Pancreas (tissue), 10 donors: ENCODE measurements at regions of chr1 and their contacts with region 1.

Region 1: DNA sequence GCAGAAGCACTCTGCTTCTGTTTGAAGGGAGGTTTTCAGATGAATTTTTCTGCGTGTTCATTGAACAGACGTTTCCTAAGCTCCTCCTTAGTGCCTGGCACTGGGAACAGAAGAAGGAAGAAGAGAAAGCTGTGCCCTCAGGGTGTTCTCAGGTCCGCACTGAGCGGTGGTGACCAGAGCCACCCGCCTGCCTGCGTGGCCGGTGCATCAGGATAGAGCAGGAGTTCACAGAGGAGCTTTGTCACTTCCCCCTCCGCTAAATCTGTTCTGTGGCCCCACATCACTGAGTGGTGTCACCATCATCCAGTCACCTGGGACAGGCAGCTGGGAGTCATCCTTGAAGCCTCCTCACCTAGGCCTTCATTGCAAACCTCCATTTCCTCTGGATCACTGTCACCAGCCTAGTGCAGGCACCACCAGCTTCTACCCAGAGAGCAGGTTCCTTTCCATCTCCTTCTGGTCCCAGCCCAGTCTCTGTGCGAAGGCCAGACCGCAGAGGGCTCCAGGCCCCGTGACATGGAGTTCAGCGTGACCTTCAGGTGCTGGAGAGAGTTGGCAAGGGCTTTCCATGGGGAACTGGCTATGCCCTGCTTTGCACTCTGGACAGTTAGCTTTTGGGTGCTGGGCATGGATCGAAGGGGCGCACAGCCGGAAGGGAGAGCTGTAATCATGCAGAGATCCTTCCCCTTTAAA is 21.7 kb downstream of the PARK7 start:
- DNase-seq: no peak
- ATAC-seq: peak in 1 of 4 donors; percentile 19
- H3K4me3 ChIP-seq: no peak overlapping the region
- H3K27ac ChIP-seq: no peak overlapping the region
- H3K4me1 ChIP-seq: no peaks in the 10 kb centered on the region
- H3K27me3 ChIP-seq: no peaks in the 10 kb centered on the region
- CTCF ChIP-seq: no peak

Region 2: GRCh38 chr1:8323706-8324105 is 340.5 kb after region 1 on chr1:
- intact Hi-C with region 1: loop called in 1 of 3 experiments (anchors 5 kb)
- DNase-seq: no peak
- ATAC-seq: peak in 1 of 4 donors; percentile 29
- H3K4me3 ChIP-seq: no peak overlapping the region
- H3K27ac ChIP-seq: no peak overlapping the region
- H3K4me1 ChIP-seq: no peaks in the 10 kb centered on the region
- H3K27me3 ChIP-seq: no peaks in the 10 kb centered on the region
- CTCF ChIP-seq: no peak

Region 3: DNA sequence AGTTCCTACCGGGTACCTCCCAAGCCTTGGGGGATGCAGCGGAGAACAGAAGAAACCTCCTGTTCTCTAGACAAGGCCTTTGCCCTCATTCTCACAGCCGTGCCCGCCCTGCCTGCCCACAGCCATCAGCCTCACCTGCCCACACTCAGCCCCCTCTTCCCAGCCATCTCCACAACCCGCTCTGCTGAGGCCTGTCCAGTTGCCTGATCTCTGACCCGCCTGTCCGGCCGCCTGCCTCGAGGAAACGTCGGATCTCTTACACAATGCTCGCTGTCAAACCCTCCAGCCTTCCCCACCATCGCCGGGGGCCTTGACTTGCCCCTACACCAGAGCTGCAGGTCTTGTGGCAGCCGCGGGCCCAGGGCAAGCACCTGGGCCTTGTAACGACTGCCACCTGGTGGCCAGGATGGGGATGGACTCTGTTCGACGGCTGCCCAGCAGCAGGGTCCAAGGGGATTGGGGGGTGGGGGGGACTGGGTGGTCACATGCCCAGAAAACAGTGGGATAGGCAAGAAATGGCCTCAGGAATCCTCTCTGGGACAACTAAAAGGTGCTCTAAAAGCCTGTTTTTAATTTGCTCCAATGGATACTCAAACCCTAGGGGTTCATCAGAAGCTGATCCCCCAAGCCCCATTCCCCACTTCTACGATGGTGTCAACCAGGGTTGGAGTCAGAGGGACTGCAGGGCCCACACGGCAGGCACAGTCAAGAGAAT is 365.7 kb after region 1 on chr1:
- intact Hi-C with region 1: loop called in 1 of 3 experiments (anchors 5 kb)
- DNase-seq: peak; percentile 46 to 86 (median 75)
- ATAC-seq: peak; percentile 74 to 84 (median 82)
- H3K4me3 ChIP-seq: no peak overlapping the region
- H3K27ac ChIP-seq: no peak overlapping the region
- H3K4me1 ChIP-seq: no peaks in the 10 kb centered on the region
- H3K27me3 ChIP-seq: no peaks in the 10 kb centered on the region
- CTCF ChIP-seq: peak; percentile 55 to 85 (median 75)